ENCODE measurements at regions of chr1 and their contacts with region 1.

Region 1: GRCh38 chr1:205658943-205659581 is 21.2 kb downstream of the SLC45A3 start:
- DNase-seq: peak; percentile 77 to 86
- ATAC-seq: peak; percentile 76 to 91 (median 86)
- H3K4me3 ChIP-seq: no peak overlapping the region
- H3K27ac ChIP-seq: no peak overlapping the region
- H3K4me1 ChIP-seq: peaks cover 0 to 18% (median 8%) of the 10 kb centered on the region in 9 donors
- H3K27me3 ChIP-seq: no peaks in the 10 kb centered on the region
- CTCF ChIP-seq: peak; percentile 72 to 97 (median 88)

Region 2: GRCh38 chr1:205528887-205529825 is 129.9 kb before region 1 on chr1:
- intact Hi-C with region 1: loop called in 9 of 10 experiments (anchors 2 to 5 kb)
- DNase-seq: peak; percentile 82 to 85
- ATAC-seq: peak; percentile 57 to 85 (median 79)
- H3K4me3 ChIP-seq: peak overlapping the region in 9 of 10 donors; percentile 9 to 50 (median 46)
- H3K27ac ChIP-seq: peak overlapping the region in 3 of 10 donors; percentile 11 to 47 (median 44)
- H3K4me1 ChIP-seq: peaks cover 11 to 41% (median 22%) of the 10 kb centered on the region in 9 donors
- H3K27me3 ChIP-seq: no peaks in the 10 kb centered on the region
- CTCF ChIP-seq: peak; percentile 89 to 99 (median 95)

Region 3: DNA sequence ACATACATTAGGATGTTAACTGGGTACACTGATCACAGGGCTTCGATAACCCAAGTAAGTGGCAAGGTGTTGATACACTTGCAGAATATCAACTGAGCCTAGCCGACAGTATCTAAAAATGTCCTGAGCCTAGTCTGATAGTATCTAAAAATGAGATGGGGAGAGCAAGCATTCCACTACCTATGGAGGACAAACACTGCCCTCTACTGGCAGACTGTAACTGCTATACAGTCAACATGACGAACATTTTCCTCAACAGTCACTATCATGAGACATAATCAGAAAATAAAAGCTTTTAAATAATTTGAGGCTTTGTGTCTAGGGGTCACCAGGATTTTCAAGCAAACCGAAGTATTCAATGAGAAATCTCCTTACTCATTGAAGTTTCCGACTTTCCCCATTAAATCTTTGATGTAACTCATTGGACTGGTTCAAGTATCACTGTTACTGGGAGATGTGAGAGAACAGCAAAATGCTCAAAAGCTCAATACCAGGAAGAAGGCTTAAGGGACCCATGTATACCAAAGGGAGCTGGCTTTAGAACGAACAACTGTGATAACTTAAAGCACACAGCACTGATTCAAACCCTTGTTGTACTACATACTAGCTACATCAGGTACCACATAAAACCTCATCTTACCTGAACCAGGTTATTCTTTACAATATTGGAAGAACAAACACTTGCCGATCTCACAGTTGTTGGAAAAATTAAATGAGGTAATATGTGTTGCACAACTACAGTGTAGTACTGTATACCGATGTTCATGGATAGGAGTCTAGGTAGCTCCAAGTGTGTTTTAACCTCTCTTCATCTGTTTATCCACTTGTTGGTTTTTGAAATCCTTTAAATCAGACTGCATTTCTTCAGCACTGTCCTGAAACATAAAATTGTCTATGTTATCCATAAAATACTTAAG is 52.3 kb after region 1 on chr1:
- intact Hi-C with region 1: loop called in 9 of 10 experiments (anchors 1 to 5 kb)
- DNase-seq: peak in 1 of 2 donors; percentile 79
- ATAC-seq: peak; percentile 76 to 87 (median 80)
- H3K4me3 ChIP-seq: no peak overlapping the region
- H3K27ac ChIP-seq: peak overlapping the region in 1 of 10 donors; percentile 24
- H3K4me1 ChIP-seq: peaks cover 0 to 41% (median 22%) of the 10 kb centered on the region in 9 donors
- H3K27me3 ChIP-seq: no peaks in the 10 kb centered on the region
- CTCF ChIP-seq: peak; percentile 76 to 94 (median 90)

Region 4: GRCh38 chr1:205983925-205984725 is 325.1 kb after region 1 on chr1:
- intact Hi-C with region 1: loop called in 4 of 10 experiments (anchors 5 kb)
- DNase-seq: peak; percentile 64 to 71
- ATAC-seq: peak; percentile 73 to 89 (median 86)
- H3K4me3 ChIP-seq: no peak overlapping the region
- H3K27ac ChIP-seq: no peak overlapping the region
- H3K4me1 ChIP-seq: peaks cover 0 to 48% (median 15%) of the 10 kb centered on the region in 9 donors
- H3K27me3 ChIP-seq: no peaks in the 10 kb centered on the region
- CTCF ChIP-seq: peak; percentile 44 to 85 (median 77)